ENCODE measurements at regions of chr5 and their contacts with region 1.

Region 1: GRCh38 chr5:59673438-59674058 is 220.0 kb downstream of the PDE4D start:
- DNase-seq: peak; percentile 70
- ATAC-seq: peak; percentile 54
- H3K4me3 ChIP-seq: no peak overlapping the region
- H3K27ac ChIP-seq: peak overlapping the region; percentile 38
- H3K4me1 ChIP-seq: peaks cover 22% of the 10 kb centered on the region
- H3K27me3 ChIP-seq: no peaks in the 10 kb centered on the region
- CTCF ChIP-seq: peak; percentile 76

Region 2: DNA sequence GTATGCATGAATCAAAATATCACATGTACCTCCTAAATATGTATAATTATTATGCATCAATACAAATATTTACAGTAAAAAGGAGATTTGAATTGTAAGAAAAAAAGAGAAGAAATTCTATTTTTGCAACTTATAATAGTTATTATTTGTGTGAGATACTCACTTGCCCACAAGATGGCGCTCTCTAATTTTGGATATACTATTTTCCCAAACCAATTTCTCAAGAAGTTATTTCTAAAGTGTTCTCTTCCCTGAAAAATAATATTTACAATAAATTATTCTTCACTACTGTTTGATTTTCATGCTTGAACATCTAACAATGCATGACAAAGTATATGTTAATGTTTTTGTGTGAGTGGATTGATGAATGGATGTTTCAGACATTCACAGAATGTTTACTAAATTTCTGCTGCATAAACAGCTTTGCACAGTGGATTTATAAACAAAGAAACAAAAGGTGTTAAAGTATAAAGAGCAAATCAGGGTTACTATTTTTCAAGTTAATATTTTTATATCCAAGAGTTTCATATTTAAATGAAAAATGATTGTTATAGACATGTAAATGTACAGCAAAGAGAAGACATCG is 283.4 kb before region 1 on chr5:
- CTCF ChIA-PET with region 1: no interaction called
- POLR2A ChIA-PET with region 1: no interaction called
- intact Hi-C with region 1: loop called (anchors 2 kb)
- DNase-seq: no peak
- ATAC-seq: no peak
- H3K4me3 ChIP-seq: no peak overlapping the region
- H3K27ac ChIP-seq: no peak overlapping the region
- H3K4me1 ChIP-seq: no peaks in the 10 kb centered on the region
- H3K27me3 ChIP-seq: no peaks in the 10 kb centered on the region
- CTCF ChIP-seq: peak; percentile 32; the same call in 1 of the 2 replicates

Region 3: GRCh38 chr5:59506285-59506877 is 167.2 kb before region 1 on chr5:
- CTCF ChIA-PET with region 1: interaction called, 4 read pairs
- POLR2A ChIA-PET with region 1: no interaction called
- intact Hi-C with region 1: loop called (anchors 1 kb)
- DNase-seq: peak; percentile 44
- ATAC-seq: peak; percentile 31; the same call in 1 of the 2 replicates
- H3K4me3 ChIP-seq: no peak overlapping the region
- H3K27ac ChIP-seq: no peak overlapping the region
- H3K4me1 ChIP-seq: no peaks in the 10 kb centered on the region
- H3K27me3 ChIP-seq: no peaks in the 10 kb centered on the region
- CTCF ChIP-seq: peak; percentile 61

Region 4: GRCh38 chr5:59724482-59725391 is 51.2 kb after region 1 on chr5:
- CTCF ChIA-PET with region 1: interaction called, 3 read pairs
- POLR2A ChIA-PET with region 1: no interaction called
- intact Hi-C with region 1: loop called (anchors 5 kb)
- DNase-seq: peak; percentile 58
- ATAC-seq: peak; percentile 61
- H3K4me3 ChIP-seq: no peak overlapping the region
- H3K27ac ChIP-seq: no peak overlapping the region
- H3K4me1 ChIP-seq: peaks cover 15% of the 10 kb centered on the region
- H3K27me3 ChIP-seq: no peaks in the 10 kb centered on the region
- CTCF ChIP-seq: peak; percentile 70